Endothelial cell of umbilical vein (primary cell): ENCODE measurements at regions of chr15 and their contacts with region 1.

Region 1: DNA sequence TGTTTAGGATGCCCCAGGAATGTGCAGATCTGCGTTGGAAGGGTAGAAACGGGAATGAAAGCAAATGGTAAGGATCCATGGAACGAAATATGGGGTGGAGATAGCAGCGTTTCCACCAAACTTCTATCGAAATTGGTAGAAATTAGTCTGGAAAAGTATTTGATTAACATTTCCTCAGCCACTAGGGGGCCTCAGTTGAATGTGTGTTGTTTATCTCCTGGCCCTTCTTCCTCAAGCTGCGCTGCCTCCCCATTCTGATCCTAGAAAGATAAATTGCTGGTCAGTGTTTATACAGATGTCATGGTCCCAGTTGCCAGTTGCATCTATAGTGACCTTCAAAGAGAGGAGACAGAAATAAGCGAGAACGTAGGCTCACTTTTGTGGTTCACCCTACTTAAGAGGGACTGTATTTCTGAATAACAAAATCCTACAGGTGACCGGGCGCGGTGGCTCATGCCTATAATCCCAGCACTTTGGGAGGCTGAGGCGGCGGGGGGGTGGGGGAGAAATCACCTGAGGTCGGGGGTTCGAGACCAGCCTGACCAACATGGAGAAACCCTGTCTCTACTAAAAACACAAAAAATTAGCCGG is 457.1 kb downstream of the SQOR start:
- DNase-seq: peak; percentile 30
- H3K4me3 ChIP-seq: no peak overlapping the region
- H3K27ac ChIP-seq: no peak overlapping the region
- H3K4me1 ChIP-seq: peaks cover 38% of the 10 kb centered on the region
- H3K27me3 ChIP-seq: no peaks in the 10 kb centered on the region
- CTCF ChIP-seq: peak; percentile 38 to 60
- POLR2A ChIP-seq: no peak

Region 2: DNA sequence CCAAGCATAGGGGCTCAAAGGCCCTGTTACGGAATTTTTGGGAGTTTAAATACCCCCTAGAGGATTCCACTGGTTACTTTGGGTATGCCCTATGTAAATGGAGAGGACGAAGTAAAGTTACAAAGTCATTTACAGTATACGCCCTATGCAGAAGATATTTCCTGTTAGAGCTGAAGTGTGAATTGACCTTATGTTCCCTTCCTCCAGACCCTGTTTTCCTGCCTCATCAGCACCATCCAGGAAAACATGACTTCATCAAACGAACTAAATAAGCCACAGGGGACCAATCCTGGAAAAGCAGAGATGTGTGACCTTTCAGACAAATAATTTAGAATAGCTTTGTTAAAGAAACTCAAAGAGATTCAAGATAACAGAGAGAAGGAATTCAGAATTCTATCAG is 279.8 kb before region 1 on chr15:
- CTCF ChIA-PET with region 1: no interaction called
- POLR2A ChIA-PET with region 1: no interaction called
- dilution Hi-C with region 1: no loop called
- intact Hi-C with region 1: loop called (anchors 5 kb)
- DNase-seq: peak; percentile 54
- H3K4me3 ChIP-seq: no peak overlapping the region
- H3K27ac ChIP-seq: no peak overlapping the region
- H3K4me1 ChIP-seq: peaks cover 11% of the 10 kb centered on the region
- H3K27me3 ChIP-seq: no peaks in the 10 kb centered on the region
- CTCF ChIP-seq: no peak
- POLR2A ChIP-seq: no peak

Region 3: GRCh38 chr15:45919806-45920205 is 172.1 kb before region 1 on chr15:
- CTCF ChIA-PET with region 1: interaction called, 11 read pairs
- POLR2A ChIA-PET with region 1: interaction called, 12 read pairs
- dilution Hi-C with region 1: no loop called
- intact Hi-C with region 1: loop called (anchors 1 kb)
- DNase-seq: peak; percentile 93
- H3K4me3 ChIP-seq: peak overlapping the region in 1 of 3 experiments; percentile 18
- H3K27ac ChIP-seq: peak overlapping the region; percentile 94
- H3K4me1 ChIP-seq: peaks cover 30% of the 10 kb centered on the region
- H3K27me3 ChIP-seq: no peaks in the 10 kb centered on the region
- CTCF ChIP-seq: no peak
- POLR2A ChIP-seq: no peak

Region 4: DNA sequence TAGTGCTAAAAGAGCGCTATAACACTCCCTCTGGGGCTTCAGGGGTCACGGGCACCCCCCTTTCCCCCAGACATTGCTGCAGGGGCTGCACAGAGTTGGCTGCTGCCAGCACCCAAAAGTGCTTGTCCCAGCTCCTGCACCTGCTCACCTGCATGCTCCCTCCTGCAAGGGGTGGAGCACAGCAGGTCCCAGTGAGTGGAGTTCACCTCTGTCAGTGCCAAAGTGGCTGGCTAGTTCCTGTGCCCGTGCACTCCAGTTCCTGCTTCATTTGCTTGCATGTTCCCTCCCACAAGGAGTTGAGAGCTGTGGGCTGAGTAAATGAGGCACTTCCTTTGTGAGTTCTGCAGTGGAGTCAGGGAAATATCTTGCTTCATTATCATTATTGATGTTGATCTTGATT is 19.8 kb after region 1 on chr15:
- CTCF ChIA-PET with region 1: no interaction called
- POLR2A ChIA-PET with region 1: no interaction called
- dilution Hi-C with region 1: no loop called
- intact Hi-C with region 1: no loop called
- DNase-seq: no peak
- H3K4me3 ChIP-seq: no peak overlapping the region
- H3K27ac ChIP-seq: no peak overlapping the region
- H3K4me1 ChIP-seq: no peaks in the 10 kb centered on the region
- H3K27me3 ChIP-seq: peaks cover 0 to 3% of the 10 kb centered on the region in 2 experiments
- CTCF ChIP-seq: no peak
- POLR2A ChIP-seq: no peak

Region 5: GRCh38 chr15:46280762-46281542 is 189.0 kb after region 1 on chr15:
- CTCF ChIA-PET with region 1: interaction called, 3 read pairs
- POLR2A ChIA-PET with region 1: no interaction called
- dilution Hi-C with region 1: no loop called
- intact Hi-C with region 1: loop called (anchors 1 kb)
- DNase-seq: peak; percentile 61
- H3K4me3 ChIP-seq: no peak overlapping the region
- H3K27ac ChIP-seq: no peak overlapping the region
- H3K4me1 ChIP-seq: no peaks in the 10 kb centered on the region
- H3K27me3 ChIP-seq: no peaks in the 10 kb centered on the region
- CTCF ChIP-seq: peak; percentile 12 to 34
- POLR2A ChIP-seq: no peak